Calu3 (cell line): ENCODE measurements at regions of chr3 and their contacts with region 1.

Region 1: DNA sequence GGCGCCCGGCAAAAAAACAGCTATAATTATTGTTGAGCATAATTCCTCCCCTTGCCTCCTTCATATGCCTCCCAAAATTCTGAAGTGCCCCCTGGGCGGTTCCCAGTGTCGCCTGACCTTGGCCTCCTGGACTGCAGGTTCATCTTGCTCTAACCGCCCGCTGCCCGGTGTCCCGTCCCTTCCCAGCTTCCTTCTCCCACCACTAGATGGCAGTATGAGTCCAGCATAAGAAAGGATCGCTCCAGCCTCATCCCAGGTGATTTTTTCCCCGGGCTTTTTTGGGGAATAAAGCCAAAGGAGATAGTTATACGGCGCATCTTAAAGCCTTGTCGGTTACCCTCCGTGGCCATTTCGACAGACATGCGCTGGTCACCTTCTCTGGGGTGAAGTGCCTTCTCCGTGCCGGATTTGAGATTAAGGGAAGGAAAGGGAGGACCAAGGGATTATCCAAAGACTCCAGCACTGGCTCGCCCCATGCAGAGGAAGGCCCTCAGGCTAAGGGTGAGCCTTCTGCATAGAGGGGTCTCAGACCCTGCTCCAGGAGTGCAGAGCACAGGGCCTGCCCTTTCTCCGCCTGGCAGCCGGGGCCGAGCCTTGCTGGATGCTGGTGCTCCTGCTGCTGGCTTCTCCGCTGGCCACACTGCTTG is 45.8 kb upstream of the TRA2B start:
- DNase-seq: peak; percentile 87
- H3K4me3 Mint-ChIP-seq: no peak overlapping the region
- H3K27ac Mint-ChIP-seq: no peak overlapping the region
- H3K4me1 Mint-ChIP-seq: peaks cover 17% of the 10 kb centered on the region
- H3K27me3 Mint-ChIP-seq: peaks cover 16% of the 10 kb centered on the region
- CTCF ChIP-seq: peak; percentile 98

Region 2: DNA sequence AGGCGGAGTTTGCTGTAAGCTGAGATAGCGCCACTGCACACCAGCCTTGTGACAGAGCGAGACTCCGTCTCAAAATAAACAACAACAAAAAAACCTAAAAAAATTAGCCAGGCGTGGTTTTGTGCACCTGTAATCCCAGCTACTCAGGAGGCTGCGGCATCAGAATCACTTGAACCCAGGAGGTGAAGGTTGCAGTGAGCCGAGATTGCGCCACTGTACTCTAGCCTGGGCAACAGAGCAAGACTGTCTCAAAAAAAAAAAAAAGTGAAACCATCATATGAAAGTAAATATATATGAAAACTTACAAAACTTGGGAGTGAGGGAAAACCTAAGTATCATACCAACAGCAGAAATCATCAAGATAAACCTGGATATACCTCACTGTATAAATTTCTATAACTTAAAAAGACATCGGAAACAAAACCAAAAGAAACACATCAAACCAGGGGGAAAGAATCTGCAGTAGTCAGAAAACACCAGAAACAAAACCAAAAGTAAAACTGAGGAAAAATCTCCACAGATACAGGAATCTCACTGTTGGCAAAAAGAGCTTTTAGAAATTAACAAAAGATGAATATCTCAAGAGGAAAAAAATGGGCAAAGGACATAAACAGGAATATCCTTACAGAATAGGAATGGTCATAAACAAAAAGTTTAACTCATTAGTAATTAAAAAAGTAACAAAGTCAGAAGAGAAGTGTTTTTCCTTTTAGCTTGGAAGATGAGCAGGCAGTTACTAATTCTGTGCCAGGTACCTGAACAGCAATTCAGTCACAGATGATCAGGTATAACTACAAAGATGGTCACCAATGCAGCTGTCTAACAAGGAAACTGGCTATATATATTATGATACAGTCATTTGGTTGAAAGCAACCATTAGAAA is 84.0 kb after region 1 on chr3:
- CTCF ChIA-PET with region 1: no interaction called
- intact Hi-C with region 1: no loop called
- DNase-seq: no peak
- H3K4me3 Mint-ChIP-seq: no peak overlapping the region
- H3K27ac Mint-ChIP-seq: no peak overlapping the region
- H3K4me1 Mint-ChIP-seq: no peaks in the 10 kb centered on the region
- H3K27me3 Mint-ChIP-seq: no peaks in the 10 kb centered on the region
- CTCF ChIP-seq: no peak

Region 3: GRCh38 chr3:186277268-186277909 is 293.8 kb after region 1 on chr3:
- CTCF ChIA-PET with region 1: interaction called, 12 read pairs
- intact Hi-C with region 1: loop called (anchors 1 kb)
- DNase-seq: peak; percentile 41
- H3K4me3 Mint-ChIP-seq: no peak overlapping the region
- H3K27ac Mint-ChIP-seq: no peak overlapping the region
- H3K4me1 Mint-ChIP-seq: no peaks in the 10 kb centered on the region
- H3K27me3 Mint-ChIP-seq: peaks cover 62% of the 10 kb centered on the region
- CTCF ChIP-seq: no peak